Gastrocnemius medialis (tissue), 4 donors: ENCODE measurements at regions of chr3 and their contacts with region 1.

Region 1: DNA sequence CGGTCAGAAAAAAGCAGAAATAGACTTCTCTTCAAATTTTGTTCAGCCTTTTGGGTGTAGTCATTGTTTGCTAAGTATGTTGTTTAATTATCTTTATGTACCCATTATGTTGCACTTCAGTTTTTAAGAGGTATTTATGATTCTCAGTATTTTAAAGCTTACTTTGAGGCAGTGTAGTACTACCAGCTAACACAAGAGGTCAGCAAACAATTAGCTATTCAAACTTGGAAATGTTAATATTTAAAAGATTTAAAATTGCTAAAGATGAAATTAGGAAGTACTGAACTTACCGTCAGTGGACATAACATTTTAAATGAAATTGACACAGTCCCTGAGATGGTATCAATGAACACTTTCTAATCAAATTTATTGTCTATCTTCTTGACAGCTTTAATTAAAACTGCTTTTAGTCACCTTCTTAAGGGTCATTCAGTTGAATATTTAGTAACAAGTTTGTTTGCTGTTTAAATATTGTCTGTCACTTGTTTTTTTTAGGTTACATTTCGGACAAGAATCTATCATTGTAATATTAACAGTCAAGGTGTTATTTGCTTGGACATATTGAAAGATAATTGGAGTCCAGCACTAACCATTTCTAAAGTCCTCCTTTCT is 28.1 kb downstream of the NKIRAS1 start:
- DNase-seq: no peak
- ATAC-seq: no peak
- H3K4me3 ChIP-seq: no peak overlapping the region
- H3K27ac ChIP-seq: peak overlapping the region; percentile 22 to 62 (median 40)
- H3K4me1 ChIP-seq: peaks cover 27 to 32% of the 10 kb centered on the region in 2 donors
- H3K27me3 ChIP-seq: no peaks in the 10 kb centered on the region
- CTCF ChIP-seq: peak; percentile 68 to 93 (median 81)
- POLR2A ChIP-seq: no peak

Region 2: DNA sequence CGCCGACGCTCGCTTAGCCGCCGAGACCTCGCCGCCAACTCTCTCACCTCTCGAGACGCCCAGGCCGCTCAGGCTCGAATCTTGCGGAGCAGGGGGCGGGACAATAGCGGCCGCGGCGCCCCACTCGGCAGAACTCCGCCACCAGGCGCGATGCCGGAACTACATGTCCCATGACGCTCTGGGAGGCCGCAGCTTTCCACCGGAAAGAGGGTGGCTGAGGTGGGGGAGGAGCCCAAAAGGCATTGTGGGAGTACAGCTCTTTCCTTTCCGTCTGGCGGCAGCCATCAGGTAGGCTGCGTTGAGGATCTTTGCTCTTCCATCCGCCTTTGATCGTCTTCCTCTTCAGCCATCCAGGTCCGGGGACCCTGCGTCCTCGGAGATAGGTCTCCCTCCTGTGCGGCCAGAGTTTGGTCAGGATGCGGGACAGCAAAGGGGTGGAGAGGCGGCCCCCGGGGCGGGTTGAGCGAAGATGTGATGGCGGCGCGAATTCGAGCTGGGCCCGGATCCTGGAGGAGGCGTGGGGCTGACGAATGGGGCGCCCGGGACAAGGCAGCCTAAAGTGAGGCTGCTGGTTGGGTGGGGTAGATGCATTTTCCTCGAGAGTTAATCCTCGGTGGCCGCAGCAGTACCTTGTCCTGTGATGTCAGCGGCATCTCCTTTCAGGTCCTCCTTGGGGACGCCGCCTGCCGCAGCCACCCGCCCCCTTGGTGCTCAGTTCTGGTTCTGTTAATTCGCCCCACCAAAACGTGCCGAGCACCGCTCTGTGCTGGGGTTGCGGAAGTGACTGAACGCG is 28.4 kb after region 1 on chr3 and contains the starts of genes NKIRAS1 and RPL15:
- in situ Hi-C with region 1: no loop called
- intact Hi-C with region 1: loop called (anchors 2 kb)
- DNase-seq: peak; percentile 97 to 98
- ATAC-seq: peak; percentile 97
- H3K4me3 ChIP-seq: peak within 1 kb of the TSS; percentile 83 to 96 (median 93)
- H3K27ac ChIP-seq: peak within 1 kb of the TSS; percentile 91 to 96 (median 92)
- H3K4me1 ChIP-seq: peaks cover 30 to 37% of the 10 kb centered on the region in 2 donors
- H3K27me3 ChIP-seq: no peaks in the 10 kb centered on the region
- CTCF ChIP-seq: peak in 4 of 5 experiments; percentile 62 to 80 (median 74)
- POLR2A ChIP-seq: peak; percentile 97 to 98
- total RNA-seq, gene NKIRAS1: 25.1 to 42.1 (median 34.7) TPM
- total RNA-seq, gene RPL15: 1,370 to 1,628 (median 1,557) TPM